ENCODE measurements at regions of chr4 and their contacts with region 1.

Region 1: GRCh38 chr4:153585026-153585425 is 99.1 kb upstream of the TLR2 start:
- DNase-seq: no peak
- H3K4me3 ChIP-seq: no peak overlapping the region
- H3K27ac ChIP-seq: peak overlapping the region; percentile 57
- H3K4me1 ChIP-seq: peaks cover 43% of the 10 kb centered on the region
- CTCF ChIP-seq: no peak

Region 2: GRCh38 chr4:153628796-153629315 is 43.8 kb after region 1 on chr4:
- CTCF ChIA-PET with region 1: no interaction called
- POLR2A ChIA-PET with region 1: no interaction called
- intact Hi-C with region 1: loop called (anchors 5 kb)
- DNase-seq: no peak
- H3K4me3 ChIP-seq: no peak overlapping the region
- H3K27ac ChIP-seq: no peak overlapping the region
- H3K4me1 ChIP-seq: no peaks in the 10 kb centered on the region
- CTCF ChIP-seq: no peak

Measured in OCI-LY7 (cell line).